CD4-positive, alpha-beta memory T cell (primary cell): ENCODE measurements at regions of chr14 and their contacts with region 1.

Region 1: DNA sequence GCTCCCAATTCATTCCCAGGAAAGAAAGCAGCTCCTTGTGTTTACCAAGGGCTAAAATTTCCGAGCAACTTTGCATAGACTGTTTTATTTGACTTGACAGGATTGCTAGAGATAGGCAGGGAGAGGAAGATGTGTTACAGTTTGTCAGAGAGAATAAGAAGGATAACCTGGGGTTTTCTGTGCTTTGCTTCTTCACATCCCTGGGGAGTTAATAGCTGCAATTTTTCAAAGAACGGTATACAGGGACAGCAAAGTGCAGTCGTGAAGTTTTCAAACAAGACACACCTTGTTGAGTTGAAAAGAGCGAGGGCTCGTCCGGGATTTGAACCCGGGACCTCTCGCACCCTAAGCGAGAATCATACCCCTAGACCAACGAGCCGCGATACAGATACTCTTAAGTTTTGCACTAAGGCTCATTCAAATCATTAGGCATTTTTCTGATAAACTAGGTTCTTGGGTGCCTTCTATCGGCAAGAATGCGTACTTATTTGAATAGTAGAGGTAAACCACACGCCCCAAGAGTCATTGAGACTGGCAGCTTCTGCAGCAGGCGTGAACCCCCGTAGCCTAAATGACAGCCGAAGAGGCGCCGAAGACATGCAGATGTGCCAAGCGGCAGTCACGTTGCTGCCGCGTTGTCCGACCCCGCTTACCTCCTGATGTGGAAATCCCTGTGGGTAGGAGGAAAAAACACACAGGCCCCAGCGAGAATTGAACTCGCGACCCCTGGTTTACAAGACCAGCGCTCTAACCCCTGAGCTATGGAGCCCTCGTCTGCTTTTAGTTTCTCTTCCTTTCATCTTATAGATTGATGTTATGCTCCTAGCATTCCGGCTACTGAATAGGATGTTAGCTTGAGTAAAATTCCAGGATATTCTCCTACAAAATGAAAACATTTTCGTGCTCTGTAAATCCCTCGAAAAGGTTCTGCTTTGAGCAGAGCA is 22.2 kb upstream of the RNASE12 start:
- DNase-seq: peak; percentile 88 to 94 (median 93)
- H3K4me3 ChIP-seq: peak overlapping the region; percentile 39 to 66
- H3K4me3 Mint-ChIP-seq: no peak overlapping the region
- H3K27ac ChIP-seq: peak overlapping the region; percentile 13
- H3K27ac Mint-ChIP-seq: no peak overlapping the region
- H3K4me1 ChIP-seq: peaks cover 44% of the 10 kb centered on the region
- H3K4me1 Mint-ChIP-seq: peaks cover 0 to 5% (median 3%) of the 10 kb centered on the region in 4 donors
- H3K27me3 ChIP-seq: no peaks in the 10 kb centered on the region
- H3K27me3 Mint-ChIP-seq: peaks cover 1 to 4% of the 10 kb centered on the region in 2 donors

Region 2: DNA sequence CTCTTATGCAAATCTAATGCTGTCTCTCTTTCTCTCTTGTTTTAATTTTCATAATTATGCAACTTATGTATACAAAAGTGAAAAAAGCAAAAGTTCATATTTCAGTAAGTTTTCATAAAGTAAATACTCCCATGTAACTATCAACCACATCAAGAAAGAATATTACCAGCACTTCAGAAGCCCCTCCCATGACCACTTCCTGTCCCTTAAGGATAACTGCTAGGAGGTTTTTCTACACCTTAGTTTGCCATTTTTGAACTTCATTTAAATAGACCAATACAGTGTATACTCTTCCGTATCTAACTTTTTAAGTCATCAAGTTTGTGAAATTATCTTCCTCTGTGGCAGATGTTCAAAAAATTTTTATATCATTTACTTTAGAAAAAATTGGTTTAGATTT is 638.5 kb before region 1 on chr14:
- CTCF ChIA-PET with region 1: no interaction called
- POLR2A ChIA-PET with region 1: no interaction called
- intact Hi-C with region 1: loop called (anchors 10 kb)
- DNase-seq: peak; percentile 60 to 76 (median 66)
- H3K4me3 ChIP-seq: peak overlapping the region in 1 of 2 donors; percentile 24
- H3K4me3 Mint-ChIP-seq: peak overlapping the region in 6 of 8 donors; percentile 11 to 70 (median 58)
- H3K27ac ChIP-seq: no peak overlapping the region
- H3K27ac Mint-ChIP-seq: peak overlapping the region; percentile 8 to 90 (median 27)
- H3K4me1 ChIP-seq: peaks cover 29% of the 10 kb centered on the region
- H3K4me1 Mint-ChIP-seq: peaks cover 21 to 38% (median 32%) of the 10 kb centered on the region in 4 donors
- H3K27me3 ChIP-seq: no peaks in the 10 kb centered on the region
- H3K27me3 Mint-ChIP-seq: no peaks in the 10 kb centered on the region

Region 3: DNA sequence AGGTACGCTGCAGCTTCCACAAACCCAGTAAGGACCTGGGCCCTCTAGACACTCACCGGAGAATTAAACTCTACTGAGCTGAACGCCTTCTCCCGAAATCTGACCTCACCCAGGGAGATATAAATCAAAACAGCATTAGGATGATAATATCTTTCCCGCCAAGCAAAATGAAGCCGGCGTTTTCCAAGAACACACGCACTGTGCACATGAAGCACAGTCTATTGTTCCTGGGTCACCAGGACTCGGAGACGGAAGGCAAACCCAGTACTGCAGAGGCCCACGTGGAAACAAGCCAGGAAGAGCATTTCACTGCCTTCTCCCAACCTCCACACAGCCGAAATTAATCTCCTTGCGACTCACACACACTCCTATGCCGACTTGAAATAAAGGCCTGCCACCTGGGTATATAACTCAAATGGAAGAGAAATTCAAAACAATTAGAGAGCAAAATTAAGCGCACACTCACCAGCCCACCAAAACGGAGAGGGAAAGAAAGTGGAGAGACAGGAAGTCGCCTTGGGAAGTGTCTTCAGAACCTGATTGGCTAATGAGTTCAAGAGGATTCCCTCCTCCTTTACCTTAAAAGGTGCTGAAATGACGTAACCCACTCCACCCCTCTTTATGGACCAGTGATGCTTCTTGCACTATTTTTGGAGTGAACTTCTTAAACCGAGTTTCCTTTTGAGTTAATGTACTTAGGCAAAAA is 280.4 kb before region 1 on chr14 and contains the start of gene CCNB1IP1:
- CTCF ChIA-PET with region 1: interaction called, 354 read pairs
- POLR2A ChIA-PET with region 1: interaction called, 34 read pairs
- intact Hi-C with region 1: loop called (anchors 1 kb)
- DNase-seq: peak; percentile 73 to 84 (median 73)
- H3K4me3 ChIP-seq: peak within 1 kb of the TSS; percentile 62 to 67
- H3K4me3 Mint-ChIP-seq: peak within 1 kb of the TSS; percentile 99 to 100 (median 99)
- H3K27ac ChIP-seq: peak within 1 kb of the TSS; percentile 67
- H3K27ac Mint-ChIP-seq: peak within 1 kb of the TSS; percentile 86 to 98 (median 98)
- H3K4me1 ChIP-seq: peaks cover 16% of the 10 kb centered on the region
- H3K4me1 Mint-ChIP-seq: peaks cover 20 to 41% (median 24%) of the 10 kb centered on the region in 4 donors
- H3K27me3 ChIP-seq: no peaks in the 10 kb centered on the region
- H3K27me3 Mint-ChIP-seq: no peaks in the 10 kb centered on the region
- total RNA-seq, gene CCNB1IP1: 21.2 to 24.3 TPM

Region 4: DNA sequence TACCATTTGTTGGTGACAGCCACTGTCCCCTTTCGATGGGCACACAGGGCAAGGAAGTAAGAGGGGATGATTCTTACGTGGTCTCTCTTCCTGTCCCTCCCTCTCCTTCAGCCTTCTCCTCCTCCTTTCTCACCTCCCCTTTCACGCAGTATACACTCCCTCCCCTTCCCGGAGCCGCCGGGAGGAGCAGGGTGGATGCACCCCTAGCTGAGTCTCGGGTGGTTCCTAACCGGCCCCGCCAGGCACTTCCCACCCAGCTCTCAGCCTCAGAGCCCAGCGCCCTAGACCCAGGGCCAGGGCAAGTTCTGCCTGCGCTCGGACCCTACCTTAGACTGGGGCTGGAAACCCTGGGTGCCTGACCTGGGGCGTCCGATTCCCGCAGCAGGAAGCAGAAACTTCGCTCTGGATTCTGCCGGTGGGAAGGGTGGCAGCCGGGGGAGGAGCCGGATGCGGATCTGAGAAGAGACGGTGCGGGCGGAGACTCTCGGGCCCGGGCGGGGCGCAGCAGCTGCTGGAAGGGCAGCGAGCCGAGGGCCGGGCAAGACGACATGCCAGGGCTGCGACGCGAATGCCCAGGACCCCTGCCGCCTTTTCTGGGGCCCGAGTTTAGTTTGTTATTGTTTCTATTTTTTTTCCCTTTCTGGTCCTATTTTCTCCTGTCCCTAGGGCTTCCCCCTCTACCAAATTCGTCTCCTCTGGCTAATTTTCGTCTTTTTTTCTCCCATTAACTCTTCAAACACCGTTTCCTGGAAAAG is 200.1 kb before region 1 on chr14 and contains the start of gene TEP1:
- CTCF ChIA-PET with region 1: interaction called, 68 read pairs
- POLR2A ChIA-PET with region 1: interaction called, 16 read pairs
- intact Hi-C with region 1: loop called (anchors 1 kb)
- DNase-seq: peak; percentile 56 to 75 (median 65)
- H3K4me3 ChIP-seq: peak within 1 kb of the TSS; percentile 73 to 79
- H3K4me3 Mint-ChIP-seq: peak within 1 kb of the TSS; percentile 92 to 100 (median 99)
- H3K27ac ChIP-seq: peak within 1 kb of the TSS; percentile 85
- H3K27ac Mint-ChIP-seq: peak within 1 kb of the TSS; percentile 91 to 99 (median 96)
- H3K4me1 ChIP-seq: peaks cover 38% of the 10 kb centered on the region
- H3K4me1 Mint-ChIP-seq: peaks cover 32 to 52% (median 41%) of the 10 kb centered on the region in 4 donors
- H3K27me3 ChIP-seq: no peaks in the 10 kb centered on the region
- H3K27me3 Mint-ChIP-seq: no peaks in the 10 kb centered on the region
- total RNA-seq, gene TEP1: 66.7 to 67.3 TPM

Region 5: GRCh38 chr14:20461274-20462001 is 151.9 kb before region 1 on chr14 and contains the start of gene PIP4P1:
- CTCF ChIA-PET with region 1: interaction called, 9 read pairs
- POLR2A ChIA-PET with region 1: interaction called, 12 read pairs
- intact Hi-C with region 1: loop called (anchors 1 kb)
- DNase-seq: peak; percentile 98 to 100 (median 99)
- H3K4me3 ChIP-seq: peak within 1 kb of the TSS; percentile 64 to 76
- H3K4me3 Mint-ChIP-seq: peak within 1 kb of the TSS; percentile 89 to 96 (median 92)
- H3K27ac ChIP-seq: peak within 1 kb of the TSS; percentile 86
- H3K27ac Mint-ChIP-seq: peak within 1 kb of the TSS; percentile 92 to 99 (median 97)
- H3K4me1 ChIP-seq: peaks cover 39% of the 10 kb centered on the region
- H3K4me1 Mint-ChIP-seq: peaks cover 19 to 35% (median 23%) of the 10 kb centered on the region in 4 donors
- H3K27me3 ChIP-seq: no peaks in the 10 kb centered on the region
- H3K27me3 Mint-ChIP-seq: no peaks in the 10 kb centered on the region
- total RNA-seq, gene PIP4P1: 77.8 to 78.1 TPM

Region 6: GRCh38 chr14:20624495-20625070 is 11.2 kb after region 1 on chr14:
- CTCF ChIA-PET with region 1: interaction called, 13 read pairs
- POLR2A ChIA-PET with region 1: interaction called, 20 read pairs
- intact Hi-C with region 1: loop called (anchors 1 kb)
- DNase-seq: peak; percentile 40 to 76 (median 54)
- H3K4me3 ChIP-seq: peak overlapping the region in 1 of 2 donors; percentile 8
- H3K4me3 Mint-ChIP-seq: peak overlapping the region; percentile 77 to 90 (median 86)
- H3K27ac ChIP-seq: no peak overlapping the region
- H3K27ac Mint-ChIP-seq: peak overlapping the region; percentile 47 to 99 (median 86)
- H3K4me1 ChIP-seq: peaks cover 31% of the 10 kb centered on the region
- H3K4me1 Mint-ChIP-seq: peaks cover 39 to 71% (median 57%) of the 10 kb centered on the region in 4 donors
- H3K27me3 ChIP-seq: peaks cover 6% of the 10 kb centered on the region
- H3K27me3 Mint-ChIP-seq: peaks cover 16 to 36% of the 10 kb centered on the region in 2 donors

Region 7: DNA sequence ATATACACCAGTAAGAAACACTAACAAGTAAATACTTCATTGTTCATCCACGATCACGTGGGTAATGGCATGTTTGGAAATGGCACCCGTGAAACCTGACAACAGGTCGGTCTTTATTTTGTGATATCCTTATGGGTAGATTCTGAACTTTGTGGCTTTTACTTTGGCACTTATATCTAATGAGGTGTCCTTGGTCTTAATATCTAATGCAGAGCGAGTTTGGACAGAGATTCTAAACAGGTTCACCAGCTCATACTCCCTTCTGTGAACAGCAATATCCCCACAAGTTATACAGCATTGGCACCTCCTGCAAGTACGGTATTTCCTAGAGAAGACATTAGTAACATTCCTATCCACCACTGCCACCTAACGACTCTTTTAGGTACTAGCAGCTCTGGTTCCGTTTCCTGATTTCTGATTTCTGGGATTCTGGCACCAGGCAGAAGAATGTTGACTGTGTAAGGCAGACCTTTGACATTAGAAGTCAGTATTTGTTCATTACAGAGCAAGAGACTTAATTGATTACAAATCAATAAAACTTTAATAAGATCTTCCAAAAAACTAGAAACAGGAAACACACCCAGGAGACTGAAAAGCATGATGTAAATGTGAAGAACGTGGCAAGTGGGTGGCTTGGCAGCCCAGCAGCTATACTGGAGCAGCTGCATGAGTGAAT is 77.6 kb after region 1 on chr14:
- CTCF ChIA-PET with region 1: interaction called, 49 read pairs
- POLR2A ChIA-PET with region 1: interaction called, 44 read pairs
- intact Hi-C with region 1: loop called (anchors 1 kb)
- DNase-seq: peak; percentile 55 to 69 (median 65)
- H3K4me3 ChIP-seq: no peak overlapping the region
- H3K4me3 Mint-ChIP-seq: no peak overlapping the region
- H3K27ac ChIP-seq: no peak overlapping the region
- H3K27ac Mint-ChIP-seq: peak overlapping the region in 1 of 7 donors; percentile 3
- H3K4me1 ChIP-seq: no peaks in the 10 kb centered on the region
- H3K4me1 Mint-ChIP-seq: peaks cover 5 to 6% (median 6%) of the 10 kb centered on the region in 4 donors
- H3K27me3 ChIP-seq: no peaks in the 10 kb centered on the region
- H3K27me3 Mint-ChIP-seq: no peaks in the 10 kb centered on the region